Kidney (tissue), 22 donors: ENCODE measurements at regions of chr11 and their contacts with region 1.

Region 1: GRCh38 chr11:75896843-75897419 is 81.9 kb downstream of the UVRAG start:
- DNase-seq: peak in 2 of 5 donors; percentile 46 to 69
- H3K4me3 ChIP-seq: no peak overlapping the region
- H3K27ac ChIP-seq: no peak overlapping the region
- H3K4me1 ChIP-seq: no peaks in the 10 kb centered on the region
- H3K27me3 ChIP-seq: no peaks in the 10 kb centered on the region
- CTCF ChIP-seq: peak; percentile 54

Region 2: DNA sequence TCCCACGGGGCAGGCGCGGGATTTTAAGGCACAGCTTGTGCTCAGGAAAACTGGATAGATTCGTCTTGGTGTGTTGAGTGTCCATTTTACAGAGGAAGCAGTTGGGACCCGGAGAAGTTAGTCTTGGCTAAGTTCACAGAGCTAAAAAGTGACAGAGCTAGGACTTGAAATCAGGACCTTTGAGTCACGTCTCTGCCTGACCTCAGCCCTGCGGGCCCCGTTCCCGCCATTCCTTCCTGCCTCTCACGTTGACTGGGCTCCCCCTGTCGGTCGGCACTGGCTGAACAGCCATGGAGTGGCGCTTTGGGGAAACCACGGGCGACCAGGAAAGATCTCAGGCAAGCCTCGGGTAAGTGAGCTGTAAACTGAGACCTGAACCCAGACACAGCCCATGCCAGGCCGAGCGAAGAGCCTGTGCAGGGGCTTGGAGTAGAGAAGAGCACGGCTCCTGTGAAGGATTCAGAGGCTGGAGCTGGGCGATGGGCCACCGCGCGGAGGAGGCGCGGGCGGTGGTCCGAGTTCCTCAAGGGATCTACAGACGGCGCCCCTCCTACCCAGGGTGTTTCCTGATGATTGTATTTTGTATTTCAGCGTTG is 255.3 kb after region 1 on chr11:
- intact Hi-C with region 1: loop called (anchors 5 kb)
- DNase-seq: peak; percentile 83 to 94 (median 85)
- H3K4me3 ChIP-seq: peak overlapping the region in 2 of 3 donors; percentile 27 to 50
- H3K27ac ChIP-seq: no peak overlapping the region
- H3K4me1 ChIP-seq: peaks cover 0 to 3% (median 0%) of the 10 kb centered on the region in 3 donors
- H3K27me3 ChIP-seq: no peaks in the 10 kb centered on the region
- CTCF ChIP-seq: peak; percentile 98

Region 3: DNA sequence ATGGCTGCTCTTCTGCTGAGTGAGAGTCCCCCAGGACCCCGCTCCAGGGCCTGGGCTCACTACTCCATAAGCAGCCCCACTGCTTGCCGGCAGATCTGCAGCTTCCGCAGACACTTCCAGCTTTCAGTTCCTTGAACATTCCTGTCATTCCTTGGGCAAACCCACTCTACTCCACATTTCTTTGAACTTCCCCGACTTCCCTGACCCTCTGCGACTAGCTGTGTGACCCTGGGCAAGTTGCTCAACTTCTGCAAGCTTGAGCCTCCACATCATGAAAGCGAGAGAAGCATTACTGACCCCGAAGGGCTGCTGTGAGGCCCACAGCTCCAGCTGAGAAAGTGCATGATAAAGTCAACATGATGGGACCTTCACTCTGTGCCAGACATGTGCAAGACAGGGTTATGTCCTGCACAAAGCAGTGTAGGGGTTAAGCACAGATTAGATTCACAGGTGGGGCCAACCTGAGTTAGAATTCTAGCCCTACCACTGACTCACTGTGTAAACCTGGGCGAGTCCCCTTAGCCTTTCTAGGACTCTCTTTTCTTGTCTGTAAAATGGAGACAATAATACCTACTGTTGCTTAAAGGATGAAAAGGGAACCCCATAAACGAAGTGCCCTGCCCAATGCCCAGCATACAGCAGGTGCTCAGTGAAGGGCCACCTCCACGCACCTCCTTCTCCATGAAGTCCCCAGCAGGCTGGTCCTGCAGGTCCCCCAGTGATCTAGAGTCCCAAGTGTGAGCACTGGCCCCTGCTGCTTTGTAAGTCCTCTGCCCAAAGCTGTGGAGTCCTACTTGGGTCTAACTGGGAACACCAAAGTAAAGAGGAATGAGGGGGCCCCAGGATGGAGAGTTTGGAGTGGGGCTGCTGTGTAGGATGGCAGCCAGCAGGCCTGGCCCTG is 432.4 kb after region 1 on chr11:
- intact Hi-C with region 1: loop called (anchors 10 kb)
- DNase-seq: peak in 4 of 5 donors; percentile 19 to 74 (median 56)
- H3K4me3 ChIP-seq: no peak overlapping the region
- H3K27ac ChIP-seq: no peak overlapping the region
- H3K4me1 ChIP-seq: no peaks in the 10 kb centered on the region
- H3K27me3 ChIP-seq: no peaks in the 10 kb centered on the region
- CTCF ChIP-seq: no peak